ENCODE measurements at regions of chr20 and their contacts with region 1.

Region 1: DNA sequence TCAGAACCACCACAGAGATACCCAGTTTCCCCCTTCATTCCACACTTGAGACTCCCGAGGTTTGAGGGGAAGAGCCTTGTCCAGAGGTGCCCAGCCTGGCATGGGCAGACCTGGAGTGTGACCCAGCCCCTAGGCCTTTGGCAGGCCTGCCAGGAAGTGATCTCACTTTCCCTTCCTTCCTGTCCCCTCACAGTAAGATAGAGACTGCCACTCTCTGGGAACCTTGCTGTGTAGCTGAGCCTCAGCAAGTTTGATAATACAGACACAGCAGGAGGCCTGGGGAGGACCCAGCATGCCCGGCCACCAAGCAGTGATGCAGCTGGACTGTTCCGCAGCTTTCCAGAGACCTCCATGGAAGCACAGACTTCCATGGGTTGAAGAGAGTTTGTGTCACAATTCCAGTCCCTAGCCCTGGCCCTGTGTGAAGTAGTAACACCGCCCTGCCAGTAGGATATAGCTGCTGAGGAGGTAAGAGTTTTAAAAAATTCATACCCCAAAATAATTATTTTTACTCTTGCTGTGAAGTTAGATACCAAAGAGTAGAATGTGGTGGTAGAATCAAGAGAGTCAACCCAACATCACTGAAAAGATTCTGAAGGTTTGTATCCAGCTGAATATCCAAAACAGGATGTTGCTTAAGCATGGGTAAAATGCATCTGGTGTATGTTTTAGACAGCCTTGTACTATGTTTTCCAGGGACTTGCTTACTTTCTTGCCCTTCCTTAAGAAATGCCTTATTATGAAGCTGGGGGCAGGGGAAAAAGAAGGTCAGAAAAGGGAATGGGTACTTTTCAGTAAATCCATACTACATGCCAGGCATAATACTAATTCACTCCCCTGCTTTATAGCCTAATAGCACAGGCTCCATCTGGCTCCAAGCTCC is 16.3 kb downstream of the PKIG start:
- DNase-seq: peak; percentile 71
- H3K4me3 Mint-ChIP-seq: peak overlapping the region; percentile 74
- H3K27ac Mint-ChIP-seq: peak overlapping the region; percentile 85
- H3K4me1 Mint-ChIP-seq: peaks cover 24% of the 10 kb centered on the region
- H3K27me3 Mint-ChIP-seq: no peaks in the 10 kb centered on the region

Region 2: GRCh38 chr20:44540834-44541233 is 57.8 kb before region 1 on chr20:
- intact Hi-C with region 1: loop called (anchors 10 kb)
- DNase-seq: no peak
- H3K4me3 Mint-ChIP-seq: no peak overlapping the region
- H3K27ac Mint-ChIP-seq: no peak overlapping the region
- H3K4me1 Mint-ChIP-seq: no peaks in the 10 kb centered on the region
- H3K27me3 Mint-ChIP-seq: peaks cover 6% of the 10 kb centered on the region